ENCODE measurements at regions of chr3 and their contacts with region 1.

Region 1: GRCh38 chr3:71583566-71584449 is at the start of gene FOXP1:
- DNase-seq: peak; percentile 79
- ATAC-seq: peak; percentile 49
- H3K4me3 Mint-ChIP-seq: peak within 1 kb of the TSS; percentile 91
- H3K27ac Mint-ChIP-seq: peak within 1 kb of the TSS; percentile 95
- H3K4me1 Mint-ChIP-seq: peaks cover 53% of the 10 kb centered on the region
- H3K27me3 Mint-ChIP-seq: no peaks in the 10 kb centered on the region
- total RNA-seq, gene FOXP1: 108 to 153 TPM

Region 2: DNA sequence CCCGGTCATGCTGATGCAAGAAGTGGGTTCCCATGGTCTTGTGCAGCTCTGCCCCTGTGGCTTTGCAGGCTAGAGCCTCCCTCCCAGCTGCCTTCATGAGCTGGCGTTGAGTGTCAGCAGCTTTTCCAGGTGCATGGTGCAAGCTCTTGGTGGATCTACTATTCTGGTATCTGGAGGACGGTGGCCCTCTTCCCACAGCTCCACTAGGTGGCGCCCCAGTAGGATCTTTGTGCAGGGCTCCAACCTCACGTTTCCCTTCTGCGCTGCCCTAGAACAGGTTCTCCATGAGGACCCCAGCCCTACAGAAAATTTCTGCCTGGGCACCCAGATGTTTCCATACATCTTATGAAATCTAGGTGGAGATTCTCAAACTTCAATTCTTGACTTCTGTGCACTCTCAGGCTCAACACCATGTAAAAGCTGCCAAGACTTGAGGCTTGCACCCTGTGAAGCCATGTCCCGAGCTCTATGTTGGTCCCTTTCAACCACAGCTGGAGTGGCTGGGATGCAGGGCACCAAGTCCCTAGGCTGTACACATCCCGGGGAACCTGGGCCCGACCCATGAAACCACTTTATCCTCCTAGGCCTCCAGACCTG is 1033.0 kb before region 1 on chr3:
- CTCF ChIA-PET with region 1: interaction called, 9 read pairs
- POLR2A ChIA-PET with region 1: no interaction called
- intact Hi-C with region 1: loop called (anchors 1 to 5 kb)
- DNase-seq: peak; percentile 88
- ATAC-seq: peak; percentile 91
- H3K4me3 Mint-ChIP-seq: no peak overlapping the region
- H3K27ac Mint-ChIP-seq: no peak overlapping the region
- H3K4me1 Mint-ChIP-seq: peaks cover 4% of the 10 kb centered on the region
- H3K27me3 Mint-ChIP-seq: peaks cover 2% of the 10 kb centered on the region

Region 3: GRCh38 chr3:71006810-71007785 is 576.7 kb before region 1 on chr3:
- CTCF ChIA-PET with region 1: interaction called, 4 read pairs
- POLR2A ChIA-PET with region 1: no interaction called
- intact Hi-C with region 1: loop called (anchors 1 to 5 kb)
- DNase-seq: no peak
- ATAC-seq: no peak
- H3K4me3 Mint-ChIP-seq: no peak overlapping the region
- H3K27ac Mint-ChIP-seq: peak overlapping the region; percentile 79
- H3K4me1 Mint-ChIP-seq: peaks cover 79% of the 10 kb centered on the region
- H3K27me3 Mint-ChIP-seq: no peaks in the 10 kb centered on the region

Region 4: DNA sequence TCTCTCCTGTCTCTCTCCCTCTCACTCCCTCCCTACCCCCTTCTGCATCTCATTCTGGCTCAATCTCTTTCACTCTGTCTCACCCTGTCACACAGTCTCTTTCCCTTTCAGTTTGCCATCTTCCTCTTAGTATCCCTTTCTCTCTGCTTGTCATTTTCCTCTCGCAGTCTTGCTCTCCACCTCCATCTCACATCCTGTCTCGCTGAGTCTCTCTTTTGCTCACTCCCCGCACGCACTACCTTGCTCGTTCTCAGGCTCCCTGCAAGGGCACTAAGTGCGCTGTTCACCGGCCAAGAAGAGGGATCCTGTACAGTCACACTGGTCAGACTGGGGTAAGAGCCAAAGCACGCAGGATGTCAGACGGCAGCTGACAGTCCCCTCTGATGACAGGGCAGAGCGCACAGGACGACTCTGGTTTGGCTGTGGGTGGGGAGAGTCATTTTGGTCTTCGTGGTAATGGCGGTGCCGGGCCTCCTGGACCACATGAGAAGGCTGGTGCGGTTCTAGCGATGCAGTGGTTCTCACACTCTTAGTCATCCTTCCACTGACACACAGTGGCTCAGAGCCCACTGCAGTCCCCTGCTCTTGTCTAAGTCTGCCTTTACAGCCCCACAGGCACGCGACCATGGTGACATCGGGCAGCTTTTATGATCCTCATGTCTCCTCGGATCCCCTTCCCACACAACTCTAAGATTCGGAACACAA is 357.1 kb before region 1 on chr3:
- CTCF ChIA-PET with region 1: interaction called, 3 read pairs
- POLR2A ChIA-PET with region 1: interaction called, 5 read pairs
- intact Hi-C with region 1: loop called (anchors 1 to 2 kb)
- DNase-seq: peak; percentile 95
- ATAC-seq: peak; percentile 89
- H3K4me3 Mint-ChIP-seq: peak overlapping the region; percentile 78
- H3K27ac Mint-ChIP-seq: peak overlapping the region; percentile 97
- H3K4me1 Mint-ChIP-seq: peaks cover 88% of the 10 kb centered on the region
- H3K27me3 Mint-ChIP-seq: no peaks in the 10 kb centered on the region

Region 5: GRCh38 chr3:71389911-71390573 is 193.8 kb before region 1 on chr3:
- CTCF ChIA-PET with region 1: interaction called, 3 read pairs
- POLR2A ChIA-PET with region 1: interaction called, 3 read pairs
- intact Hi-C with region 1: loop called in 1 of 2 experiments (anchors 2 kb)
- DNase-seq: peak; percentile 52
- ATAC-seq: peak; percentile 18
- H3K4me3 Mint-ChIP-seq: peak overlapping the region; percentile 52
- H3K27ac Mint-ChIP-seq: peak overlapping the region; percentile 69
- H3K4me1 Mint-ChIP-seq: peaks cover 78% of the 10 kb centered on the region
- H3K27me3 Mint-ChIP-seq: no peaks in the 10 kb centered on the region

Region 6: DNA sequence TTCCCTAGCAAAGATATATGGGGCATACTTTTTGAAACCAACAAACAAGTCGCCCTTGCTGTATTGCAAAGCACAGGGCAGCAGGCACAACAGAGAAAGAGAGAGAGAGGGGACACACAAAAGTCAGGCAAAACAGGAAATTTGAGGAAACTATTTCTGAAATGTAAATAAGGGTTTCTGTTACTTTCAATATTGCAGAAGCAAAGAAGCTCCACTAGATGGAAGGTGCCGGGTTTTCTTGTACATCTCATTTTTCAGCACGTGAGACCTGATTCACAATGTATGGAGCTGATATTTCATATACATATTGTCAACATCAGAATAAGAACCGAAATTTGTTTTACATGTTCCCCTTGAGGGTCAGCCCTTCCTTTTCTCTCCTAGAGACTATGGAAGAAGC is 127.7 kb before region 1 on chr3:
- CTCF ChIA-PET with region 1: interaction called, 3 read pairs
- POLR2A ChIA-PET with region 1: no interaction called
- intact Hi-C with region 1: loop called (anchors 5 kb)
- DNase-seq: no peak
- ATAC-seq: peak; percentile 10
- H3K4me3 Mint-ChIP-seq: peak overlapping the region; percentile 62
- H3K27ac Mint-ChIP-seq: peak overlapping the region; percentile 92
- H3K4me1 Mint-ChIP-seq: peaks cover 91% of the 10 kb centered on the region
- H3K27me3 Mint-ChIP-seq: no peaks in the 10 kb centered on the region

Region 7: DNA sequence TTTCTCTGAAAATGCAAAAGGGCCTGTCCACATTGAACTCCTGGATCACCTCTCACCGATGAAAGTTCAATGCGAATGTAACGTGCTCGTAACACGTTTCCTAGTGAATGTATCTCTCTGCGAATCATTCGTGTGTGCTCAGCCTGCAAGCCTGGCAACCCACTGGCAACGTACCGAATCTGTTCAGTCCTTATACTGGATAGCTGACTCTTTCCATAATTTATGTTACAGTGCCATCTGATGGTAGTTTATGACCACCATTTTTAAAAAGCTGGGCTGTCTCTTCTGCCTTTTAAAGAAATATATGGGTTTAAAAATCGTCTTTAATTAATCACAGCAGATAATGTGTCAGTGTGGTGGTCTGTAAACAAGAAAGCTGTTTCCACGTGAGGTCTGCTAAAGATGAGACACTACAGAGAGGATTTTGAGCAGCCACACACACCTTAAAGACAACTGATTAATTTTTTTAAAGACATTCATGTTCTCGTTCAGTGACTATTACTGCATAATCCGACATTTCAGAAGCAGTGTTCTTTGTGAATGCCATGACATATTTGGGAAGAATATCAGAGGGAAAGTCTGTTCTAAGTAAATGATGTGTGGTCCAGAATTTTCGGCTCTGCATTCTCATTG is 69.1 kb after region 1 on chr3:
- CTCF ChIA-PET with region 1: no interaction called
- POLR2A ChIA-PET with region 1: no interaction called
- intact Hi-C with region 1: loop called in 1 of 2 experiments (anchors 5 kb)
- DNase-seq: peak; percentile 55
- ATAC-seq: peak; percentile 80
- H3K4me3 Mint-ChIP-seq: no peak overlapping the region
- H3K27ac Mint-ChIP-seq: no peak overlapping the region
- H3K4me1 Mint-ChIP-seq: peaks cover 5% of the 10 kb centered on the region
- H3K27me3 Mint-ChIP-seq: no peaks in the 10 kb centered on the region

Measured in activated CD4-positive, alpha-beta T cell treated with anti-CD3 and anti-CD28 coated beads for 36 hours (primary cell).